BJ (cell line): ENCODE measurements at regions of chr15 and their contacts with region 1.

Region 1: DNA sequence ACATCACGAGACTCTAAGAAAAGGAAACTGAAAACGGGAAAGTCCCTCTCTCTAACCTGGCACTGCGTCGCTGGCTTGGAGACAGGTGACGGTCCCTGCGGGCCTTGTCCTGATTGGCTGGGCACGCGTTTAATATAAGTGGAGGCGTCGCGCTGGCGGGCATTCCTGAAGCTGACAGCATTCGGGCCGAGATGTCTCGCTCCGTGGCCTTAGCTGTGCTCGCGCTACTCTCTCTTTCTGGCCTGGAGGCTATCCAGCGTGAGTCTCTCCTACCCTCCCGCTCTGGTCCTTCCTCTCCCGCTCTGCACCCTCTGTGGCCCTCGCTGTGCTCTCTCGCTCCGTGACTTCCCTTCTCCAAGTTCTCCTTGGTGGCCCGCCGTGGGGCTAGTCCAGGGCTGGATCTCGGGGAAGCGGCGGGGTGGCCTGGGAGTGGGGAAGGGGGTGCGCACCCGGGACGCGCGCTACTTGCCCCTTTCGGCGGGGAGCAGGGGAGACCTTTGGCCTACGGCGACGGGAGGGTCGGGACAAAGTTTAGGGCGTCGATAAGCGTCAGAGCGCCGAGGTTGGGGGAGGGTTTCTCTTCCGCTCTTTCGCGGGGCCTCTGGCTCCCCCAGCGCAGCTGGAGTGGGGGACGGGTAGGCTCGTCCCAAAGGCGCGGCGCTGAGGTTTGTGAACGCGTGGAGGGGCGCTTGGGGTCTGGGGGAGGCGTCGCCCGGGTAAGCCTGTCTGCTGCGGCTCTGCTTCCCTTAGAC is at the start of gene B2M:
- DNase-seq: peak; percentile 77
- H3K4me3 ChIP-seq: peak within 1 kb of the TSS; percentile 98
- H3K27me3 ChIP-seq: no peaks in the 10 kb centered on the region
- CTCF ChIP-seq: no peak
- polyA plus RNA-seq, gene B2M: 2,480 and 4,424 TPM in 2 replicates

Region 2: DNA sequence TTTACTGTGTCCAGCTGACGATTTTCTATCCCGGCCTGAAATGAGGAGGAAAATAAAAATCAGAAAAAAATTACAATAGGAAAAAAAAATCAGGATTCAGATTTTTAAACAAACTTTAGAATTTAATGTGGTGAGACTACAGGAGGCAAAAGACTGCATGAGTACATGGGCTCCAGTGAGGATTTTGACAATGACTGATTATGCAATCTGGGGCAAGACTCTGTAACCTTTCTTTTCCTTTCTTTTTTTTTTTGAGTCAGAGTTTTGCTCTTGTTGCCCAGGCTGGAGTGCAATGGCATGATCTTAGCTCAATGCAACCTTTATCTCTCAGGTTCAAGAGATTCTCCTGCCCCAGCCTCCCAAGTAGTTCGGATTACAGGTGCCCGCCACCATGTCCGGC is 77.9 kb before region 1 on chr15:
- CTCF ChIA-PET with region 1: no interaction called
- POLR2A ChIA-PET with region 1: no interaction called
- DNase-seq: no peak
- H3K4me3 ChIP-seq: no peak overlapping the region
- H3K27me3 ChIP-seq: no peaks in the 10 kb centered on the region
- CTCF ChIP-seq: no peak

Region 3: GRCh38 chr15:44728576-44729407 is 17.3 kb after region 1 on chr15:
- CTCF ChIA-PET with region 1: interaction called, 13 read pairs
- POLR2A ChIA-PET with region 1: interaction called, 7 read pairs
- DNase-seq: peak; percentile 98
- H3K4me3 ChIP-seq: peak overlapping the region; percentile 68
- H3K27me3 ChIP-seq: no peaks in the 10 kb centered on the region
- CTCF ChIP-seq: no peak